WTC11 (cell line): ENCODE measurements at regions of chr12 and their contacts with region 1.

Region 1: DNA sequence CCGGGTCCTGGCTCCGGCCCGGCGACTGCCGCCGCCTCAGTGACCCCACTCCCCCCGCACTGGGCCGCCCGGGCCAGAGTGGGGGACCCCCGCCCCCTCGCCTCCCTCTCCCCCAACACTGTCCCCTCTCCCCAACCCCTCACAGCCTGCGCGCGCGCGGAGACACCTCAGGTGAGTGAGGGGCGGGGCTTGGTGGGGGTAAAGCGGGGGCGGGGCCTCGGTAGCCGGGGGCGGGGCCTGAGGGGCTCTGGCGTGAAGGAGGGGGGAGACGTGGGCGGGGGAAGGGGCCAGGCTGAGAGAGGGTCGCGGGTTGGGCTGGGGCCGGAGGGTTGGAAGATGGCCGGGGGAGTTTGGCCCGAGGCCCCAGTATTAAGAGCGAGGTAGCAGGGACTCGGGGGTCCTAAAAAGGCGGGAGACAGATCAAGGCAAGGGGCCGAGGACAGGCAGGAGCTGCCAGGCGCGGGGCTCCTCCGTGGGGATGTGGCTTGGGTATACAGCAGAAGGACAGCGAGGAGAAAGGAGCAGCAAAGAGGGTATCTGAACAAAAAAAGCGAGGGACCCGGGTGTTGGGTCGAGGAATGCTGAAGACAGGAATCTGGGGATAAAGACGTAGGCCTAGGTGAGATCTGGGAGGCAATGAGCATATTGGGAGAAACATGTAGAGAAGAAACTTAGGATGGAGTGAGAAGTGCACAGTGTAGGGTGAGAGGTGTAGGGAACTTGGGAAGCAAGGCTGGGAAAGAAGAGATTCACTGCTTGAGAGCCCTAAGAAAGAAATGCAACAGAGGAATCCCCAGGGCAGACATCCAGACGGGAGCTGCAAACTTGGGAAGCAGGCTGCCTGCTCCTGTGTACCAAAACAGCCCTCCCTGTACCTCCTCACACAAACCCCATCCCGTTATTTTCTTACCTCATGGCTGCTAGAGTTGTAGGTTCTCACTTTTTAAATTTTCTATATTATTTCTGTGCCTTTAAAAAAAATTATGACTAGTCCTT is 10.8 kb downstream of the SUOX start:
- DNase-seq: peak; percentile 86
- ATAC-seq: peak; percentile 91
- H3K4me3 Mint-ChIP-seq: peak overlapping the region; percentile 84
- H3K27ac Mint-ChIP-seq: peak overlapping the region; percentile 82
- H3K4me1 Mint-ChIP-seq: peaks cover 19% of the 10 kb centered on the region
- H3K27me3 Mint-ChIP-seq: no peaks in the 10 kb centered on the region; the same call in 1 of the 2 replicates
- CTCF ChIP-seq: no peak

Region 2: GRCh38 chr12:56020423-56021184 is 12.7 kb after region 1 on chr12 and contains the start of gene IKZF4:
- CTCF ChIA-PET with region 1: interaction called, 7 read pairs
- POLR2A ChIA-PET with region 1: interaction called, 21 read pairs
- DNase-seq: peak; percentile 72
- ATAC-seq: peak; percentile 91
- H3K4me3 Mint-ChIP-seq: peak within 1 kb of the TSS; percentile 89
- H3K27ac Mint-ChIP-seq: peak within 1 kb of the TSS; percentile 95
- H3K4me1 Mint-ChIP-seq: peaks cover 29% of the 10 kb centered on the region
- H3K27me3 Mint-ChIP-seq: no peaks in the 10 kb centered on the region
- CTCF ChIP-seq: no peak
- total RNA-seq, gene IKZF4: 13.6 to 14.9 TPM (median 14.8 TPM) in 3 replicates

Region 3: DNA sequence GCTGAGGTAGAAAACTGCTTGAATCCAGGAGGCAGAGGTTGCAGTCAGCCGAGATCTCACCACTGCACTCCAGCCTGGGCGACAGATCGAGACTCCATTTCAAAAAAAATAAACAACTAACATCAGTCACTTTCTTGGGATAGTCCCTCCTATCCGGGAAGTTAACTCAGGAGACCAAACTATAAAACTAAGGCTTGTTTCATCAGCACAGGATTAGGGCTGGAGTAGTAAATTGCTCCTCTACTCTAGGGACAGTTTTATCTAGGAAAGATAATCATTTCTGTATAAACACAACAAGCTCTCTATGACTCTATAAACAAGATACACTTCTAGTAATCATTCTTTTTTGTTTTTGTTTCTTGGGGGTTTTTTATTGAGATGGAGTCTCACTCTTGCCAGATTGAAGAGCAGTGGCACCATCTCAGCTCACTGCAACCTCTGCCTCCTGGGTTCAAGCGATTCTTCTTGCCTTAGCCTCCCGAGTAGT is 45.6 kb after region 1 on chr12:
- CTCF ChIA-PET with region 1: no interaction called
- POLR2A ChIA-PET with region 1: no interaction called
- DNase-seq: no peak
- ATAC-seq: no peak
- H3K4me3 Mint-ChIP-seq: no peak overlapping the region
- H3K27ac Mint-ChIP-seq: no peak overlapping the region
- H3K4me1 Mint-ChIP-seq: no peaks in the 10 kb centered on the region
- H3K27me3 Mint-ChIP-seq: no peaks in the 10 kb centered on the region
- CTCF ChIP-seq: no peak

Region 4: GRCh38 chr12:56230432-56231183 is 222.7 kb after region 1 on chr12:
- CTCF ChIA-PET with region 1: no interaction called
- POLR2A ChIA-PET with region 1: no interaction called
- DNase-seq: peak; percentile 24
- ATAC-seq: peak; percentile 38
- H3K4me3 Mint-ChIP-seq: no peak overlapping the region
- H3K27ac Mint-ChIP-seq: no peak overlapping the region
- H3K4me1 Mint-ChIP-seq: peaks cover 6% of the 10 kb centered on the region; the same call in 1 of the 2 replicates
- H3K27me3 Mint-ChIP-seq: peaks cover 28% of the 10 kb centered on the region
- CTCF ChIP-seq: no peak